MCF 10A (cell line): ENCODE measurements at regions of chr11 and their contacts with region 1.

Region 1: DNA sequence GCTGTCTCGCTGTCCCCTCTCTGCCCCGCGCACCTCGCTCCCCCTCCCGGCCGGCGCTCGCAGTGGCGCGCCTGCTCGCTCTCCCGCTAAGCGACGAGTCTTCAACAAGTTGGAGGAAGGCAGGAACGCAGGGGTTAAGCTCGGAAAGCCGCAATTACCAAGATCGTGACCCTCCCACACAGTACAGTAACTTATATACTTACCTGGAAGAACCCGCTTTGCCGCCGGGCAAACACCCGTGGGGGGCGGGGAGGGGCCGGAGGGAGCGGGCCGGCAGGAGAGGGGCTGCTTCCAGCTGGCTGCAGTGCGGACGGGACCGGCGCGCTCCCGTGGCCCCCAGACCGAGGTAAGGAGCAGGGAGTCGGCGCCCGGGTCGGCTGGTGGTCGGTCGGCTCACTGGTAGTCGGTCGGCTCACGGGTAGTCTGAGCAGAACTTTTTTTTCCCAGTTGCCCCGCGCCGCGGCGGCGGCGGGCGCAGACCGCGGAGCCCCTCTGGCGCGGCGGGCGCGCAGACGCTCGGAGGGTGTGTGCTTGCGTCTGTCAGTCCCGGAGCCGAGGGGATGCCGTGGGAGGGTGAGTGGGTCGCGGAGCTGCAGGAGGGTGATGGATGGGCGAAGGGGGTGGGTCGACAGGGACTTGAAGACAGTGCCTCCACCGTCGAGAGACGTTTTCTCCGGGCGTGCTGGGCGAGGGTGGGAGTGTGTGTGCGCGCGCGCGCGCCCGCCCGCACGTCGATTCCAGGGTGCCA is 101.2 kb upstream of the HSD17B12 start:
- DNase-seq: peak; percentile 21
- H3K4me3 Mint-ChIP-seq: peak overlapping the region; percentile 65
- H3K27ac Mint-ChIP-seq: no peak overlapping the region
- H3K4me1 Mint-ChIP-seq: peaks cover 11% of the 10 kb centered on the region
- H3K27me3 Mint-ChIP-seq: peaks cover 89% of the 10 kb centered on the region
- CTCF ChIP-seq: no peak

Region 2: GRCh38 chr11:43567396-43567975 is 11.9 kb before region 1 on chr11:
- CTCF ChIA-PET with region 1: interaction called, 15 read pairs
- POLR2A ChIA-PET with region 1: interaction called, 3 read pairs
- intact Hi-C with region 1: no loop called
- DNase-seq: peak; percentile 70
- H3K4me3 Mint-ChIP-seq: no peak overlapping the region
- H3K27ac Mint-ChIP-seq: no peak overlapping the region
- H3K4me1 Mint-ChIP-seq: no peaks in the 10 kb centered on the region
- H3K27me3 Mint-ChIP-seq: peaks cover 59% of the 10 kb centered on the region
- CTCF ChIP-seq: peak; percentile 63

Region 3: DNA sequence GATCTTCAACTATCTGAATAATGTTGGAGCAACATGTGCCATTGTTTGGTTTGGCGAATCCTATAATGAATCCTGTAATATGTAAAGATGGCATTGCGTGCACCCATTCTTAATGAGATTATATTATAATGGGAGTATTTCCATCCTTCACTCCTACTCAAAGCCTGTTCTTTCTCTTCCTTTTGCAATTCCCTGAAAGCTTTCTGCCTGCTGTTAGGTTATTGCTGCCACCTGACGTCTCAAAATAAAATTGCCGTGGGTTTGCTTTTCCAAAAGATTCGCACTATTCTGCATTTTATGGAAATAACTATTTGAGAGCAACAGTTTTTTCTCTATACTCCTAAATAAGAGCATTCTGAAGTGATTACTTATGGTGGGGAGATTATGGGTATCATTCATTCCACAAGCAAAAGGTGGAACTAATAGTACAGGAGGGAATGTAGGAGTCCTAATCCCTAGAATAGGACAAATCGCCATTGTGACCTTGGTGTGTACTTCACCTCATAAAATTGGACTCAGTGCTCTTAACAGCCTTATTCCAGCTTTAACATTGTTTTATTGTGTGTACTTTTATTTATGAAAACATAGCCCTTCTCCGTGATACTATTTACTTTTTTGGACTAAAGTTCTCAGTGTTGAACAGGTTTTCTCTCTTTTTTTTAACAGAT is 231.7 kb after region 1 on chr11:
- CTCF ChIA-PET with region 1: no interaction called
- POLR2A ChIA-PET with region 1: no interaction called
- intact Hi-C with region 1: loop called (anchors 10 kb)
- DNase-seq: no peak
- H3K4me3 Mint-ChIP-seq: no peak overlapping the region
- H3K27ac Mint-ChIP-seq: no peak overlapping the region
- H3K4me1 Mint-ChIP-seq: no peaks in the 10 kb centered on the region
- H3K27me3 Mint-ChIP-seq: no peaks in the 10 kb centered on the region
- CTCF ChIP-seq: no peak